Endothelial cell of umbilical vein (primary cell): ENCODE measurements at regions of chr21 and their contacts with region 1.

Region 1: DNA sequence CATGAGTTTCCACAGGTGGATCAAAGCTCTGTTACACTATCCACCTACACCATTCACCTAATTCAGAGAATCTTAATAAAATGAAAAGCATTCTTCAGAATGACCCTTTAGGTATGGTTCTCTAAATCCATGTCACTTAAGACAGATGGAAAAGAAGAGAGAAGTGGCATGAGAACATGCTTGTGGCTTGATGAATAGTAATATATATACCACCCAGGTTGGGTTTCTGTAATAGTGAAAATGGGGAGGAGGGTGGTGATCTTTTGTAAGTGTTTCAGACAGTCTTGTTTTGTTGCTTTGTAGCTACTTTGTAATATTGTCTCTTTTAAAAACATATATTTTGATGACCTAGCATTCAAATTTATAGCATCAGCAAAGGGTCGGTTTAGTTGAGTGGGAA is 469.8 kb downstream of the USP25 start:
- DNase-seq: no peak
- H3K4me3 ChIP-seq: no peak overlapping the region
- H3K27ac ChIP-seq: no peak overlapping the region
- H3K4me1 ChIP-seq: peaks cover 24% of the 10 kb centered on the region
- H3K27me3 ChIP-seq: no peaks in the 10 kb centered on the region
- CTCF ChIP-seq: no peak
- POLR2A ChIP-seq: no peak

Region 2: DNA sequence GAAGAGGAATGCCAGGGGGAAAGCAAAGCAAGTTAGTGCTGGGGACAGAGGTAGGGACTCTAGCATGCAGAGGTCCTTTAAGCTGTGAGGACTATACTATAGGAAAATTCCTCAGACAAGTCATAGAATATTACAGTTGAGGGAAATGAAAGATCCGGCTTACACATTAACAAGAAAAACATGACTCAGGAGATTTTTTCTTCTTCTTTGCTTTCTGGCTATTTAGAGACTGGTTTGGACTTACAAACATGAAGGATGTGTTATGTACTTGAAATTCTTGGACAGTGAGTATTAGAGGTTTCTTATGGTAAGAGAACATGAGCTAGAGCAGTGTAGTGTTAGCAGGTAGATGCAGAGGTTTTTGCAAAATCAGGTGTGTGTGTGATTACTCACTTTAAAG is 444.9 kb before region 1 on chr21:
- CTCF ChIA-PET with region 1: no interaction called
- POLR2A ChIA-PET with region 1: no interaction called
- dilution Hi-C with region 1: no loop called
- intact Hi-C with region 1: no loop called
- DNase-seq: peak; percentile 49
- H3K4me3 ChIP-seq: no peak overlapping the region
- H3K27ac ChIP-seq: peak overlapping the region; percentile 17
- H3K4me1 ChIP-seq: peaks cover 30% of the 10 kb centered on the region
- H3K27me3 ChIP-seq: no peaks in the 10 kb centered on the region
- CTCF ChIP-seq: no peak
- POLR2A ChIP-seq: no peak

Region 3: GRCh38 chr21:16211339-16212303 is 12.1 kb after region 1 on chr21:
- CTCF ChIA-PET with region 1: interaction called, 15 read pairs
- POLR2A ChIA-PET with region 1: interaction called, 4 read pairs
- dilution Hi-C with region 1: no loop called
- intact Hi-C with region 1: loop called (anchors 1 kb)
- DNase-seq: peak; percentile 37
- H3K4me3 ChIP-seq: no peak overlapping the region
- H3K27ac ChIP-seq: no peak overlapping the region
- H3K4me1 ChIP-seq: peaks cover 26% of the 10 kb centered on the region
- H3K27me3 ChIP-seq: no peaks in the 10 kb centered on the region
- CTCF ChIP-seq: no peak
- POLR2A ChIP-seq: no peak